Spleen (tissue), 13 donors: ENCODE measurements at regions of chr2 and their contacts with region 1.

Region 1: DNA sequence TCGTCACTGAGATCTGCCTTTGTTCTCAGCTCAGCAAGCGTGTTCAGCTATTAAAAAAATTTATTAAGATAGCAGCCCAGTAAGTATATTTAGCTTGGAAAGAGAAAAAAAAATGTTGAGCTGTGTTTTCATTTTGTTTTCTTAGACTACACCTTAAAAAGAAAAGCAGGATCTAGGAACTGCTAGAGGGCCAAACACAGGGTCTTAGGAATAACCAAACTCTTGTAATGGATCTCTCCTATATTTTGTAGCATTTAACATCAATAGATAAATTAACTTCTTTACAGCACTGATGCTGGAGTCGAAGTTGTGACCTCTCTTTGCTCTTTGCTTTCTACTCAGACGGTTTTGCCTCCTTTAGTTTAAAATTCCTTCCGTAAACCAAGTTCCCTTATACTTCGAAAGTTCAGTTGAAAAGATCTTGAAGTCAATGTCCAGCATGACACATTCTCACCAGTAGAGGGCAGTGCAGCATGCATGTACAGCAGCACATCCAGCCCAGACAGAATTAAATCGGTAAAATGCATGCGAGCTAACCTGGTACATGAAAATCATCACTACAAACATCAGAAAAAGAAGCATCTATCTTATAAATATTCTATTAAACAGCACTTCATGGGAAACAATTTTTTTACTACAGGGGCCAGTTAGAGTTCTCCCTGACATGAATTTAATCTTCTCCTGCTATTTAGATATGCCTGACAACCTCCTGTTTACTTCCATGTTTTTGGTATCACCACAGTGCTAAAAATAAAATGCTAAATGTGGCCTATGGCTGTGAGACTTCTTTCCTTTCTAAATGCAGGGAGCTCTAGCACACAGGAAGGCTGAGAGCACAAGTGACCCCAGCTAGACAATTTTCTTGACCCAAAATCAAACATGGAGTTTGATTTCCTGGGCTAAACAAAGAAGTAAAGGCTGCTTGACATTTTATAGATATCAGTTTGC is 48.2 kb upstream of the MAP3K20 start:
- DNase-seq: no peak
- H3K4me3 ChIP-seq: no peak overlapping the region
- H3K27ac ChIP-seq: no peak overlapping the region
- H3K4me1 ChIP-seq: peaks cover 0 to 9% (median 0%) of the 10 kb centered on the region in 6 donors
- H3K27me3 ChIP-seq: no peaks in the 10 kb centered on the region
- CTCF ChIP-seq: peak; percentile 81 to 93 (median 88)
- POLR2A ChIP-seq: no peak

Region 2: GRCh38 chr2:173210270-173211196 is 183.1 kb after region 1 on chr2:
- intact Hi-C with region 1: loop called (anchors 2 kb)
- DNase-seq: no peak
- H3K4me3 ChIP-seq: no peak overlapping the region
- H3K27ac ChIP-seq: no peak overlapping the region
- H3K4me1 ChIP-seq: peaks cover 0 to 9% (median 5%) of the 10 kb centered on the region in 6 donors
- H3K27me3 ChIP-seq: no peaks in the 10 kb centered on the region
- CTCF ChIP-seq: peak; percentile 63 to 87 (median 82)
- POLR2A ChIP-seq: no peak